Naive thymus-derived CD4-positive, alpha-beta T cell (primary cell): ENCODE measurements at regions of chr3 and their contacts with region 1.

Region 1: GRCh38 chr3:7800006-7800780 is 701.4 kb upstream of the LMCD1 start:
- DNase-seq: peak in 4 of 9 donors; percentile 19 to 44 (median 30)
- ATAC-seq: no peak
- H3K4me3 ChIP-seq: no peak overlapping the region
- H3K4me3 Mint-ChIP-seq: no peak overlapping the region
- H3K27ac ChIP-seq: no peak overlapping the region
- H3K27ac Mint-ChIP-seq: no peak overlapping the region
- H3K4me1 ChIP-seq: no peaks in the 10 kb centered on the region
- H3K4me1 Mint-ChIP-seq: peaks cover 0 to 23% (median 7%) of the 10 kb centered on the region in 7 donors
- H3K27me3 ChIP-seq: no peaks in the 10 kb centered on the region
- H3K27me3 Mint-ChIP-seq: peaks cover 0 to 3% (median 0%) of the 10 kb centered on the region in 5 donors

Region 2: DNA sequence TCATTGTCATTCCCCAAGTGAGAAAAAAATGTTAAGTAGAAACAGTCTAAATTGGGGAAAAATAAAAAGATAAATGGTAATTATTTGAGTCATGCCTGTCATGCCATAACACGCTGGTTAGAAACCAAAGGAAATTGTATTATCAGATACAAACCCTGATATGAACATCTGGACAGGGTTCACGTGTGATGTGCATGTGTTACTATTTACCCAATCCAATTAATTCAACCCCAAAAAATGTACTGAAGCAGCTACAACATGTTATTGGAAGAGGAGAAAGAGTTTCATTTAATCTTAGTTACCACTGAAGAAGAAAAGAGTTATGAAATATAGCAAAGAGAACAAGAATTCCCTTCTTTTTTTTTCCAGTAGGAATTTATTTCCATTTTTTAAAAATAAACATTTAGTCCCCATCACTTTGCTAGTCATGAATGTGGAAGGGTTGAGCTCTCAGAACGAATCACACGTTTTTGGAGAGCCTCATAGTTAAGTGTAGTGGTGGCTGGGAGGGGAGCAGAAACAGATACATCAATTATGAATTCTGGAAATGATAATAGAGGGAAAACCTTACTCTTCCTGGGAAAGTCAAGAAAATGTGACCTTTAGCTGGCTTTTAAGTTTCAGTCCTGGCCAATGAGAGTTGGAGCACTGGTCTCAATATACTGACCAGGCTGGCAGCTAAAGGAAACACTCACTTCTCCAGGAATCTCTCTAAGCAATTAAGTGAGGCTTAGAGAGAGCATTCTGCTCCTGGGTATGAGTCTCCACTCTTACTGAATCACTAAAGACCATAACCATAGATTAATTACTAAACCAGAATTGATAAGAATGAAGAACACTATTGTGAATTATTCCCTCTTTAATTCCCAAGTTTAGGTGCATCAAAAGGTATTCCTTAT is 142.7 kb before region 1 on chr3:
- CTCF ChIA-PET with region 1: no interaction called
- POLR2A ChIA-PET with region 1: no interaction called
- intact Hi-C with region 1: no loop called
- DNase-seq: no peak
- ATAC-seq: no peak
- H3K4me3 ChIP-seq: no peak overlapping the region
- H3K4me3 Mint-ChIP-seq: no peak overlapping the region
- H3K27ac ChIP-seq: no peak overlapping the region
- H3K27ac Mint-ChIP-seq: no peak overlapping the region
- H3K4me1 ChIP-seq: no peaks in the 10 kb centered on the region
- H3K4me1 Mint-ChIP-seq: no peaks in the 10 kb centered on the region
- H3K27me3 ChIP-seq: no peaks in the 10 kb centered on the region
- H3K27me3 Mint-ChIP-seq: peaks cover 0 to 15% (median 4%) of the 10 kb centered on the region in 5 donors

Region 3: GRCh38 chr3:7876741-7877297 is 76.6 kb after region 1 on chr3:
- CTCF ChIA-PET with region 1: no interaction called
- POLR2A ChIA-PET with region 1: no interaction called
- intact Hi-C with region 1: loop called in 1 of 2 experiments (anchors 5 kb)
- DNase-seq: peak in 8 of 9 donors; percentile 23 to 92 (median 82)
- ATAC-seq: peak; percentile 89
- H3K4me3 ChIP-seq: no peak overlapping the region
- H3K4me3 Mint-ChIP-seq: peak overlapping the region; percentile 52 to 87 (median 68)
- H3K27ac ChIP-seq: peak overlapping the region; percentile 27
- H3K27ac Mint-ChIP-seq: peak overlapping the region; percentile 79 to 97 (median 88)
- H3K4me1 ChIP-seq: peaks cover 11 to 27% of the 10 kb centered on the region in 2 donors
- H3K4me1 Mint-ChIP-seq: peaks cover 9 to 81% (median 51%) of the 10 kb centered on the region in 7 donors
- H3K27me3 ChIP-seq: no peaks in the 10 kb centered on the region
- H3K27me3 Mint-ChIP-seq: no peaks in the 10 kb centered on the region

Region 4: DNA sequence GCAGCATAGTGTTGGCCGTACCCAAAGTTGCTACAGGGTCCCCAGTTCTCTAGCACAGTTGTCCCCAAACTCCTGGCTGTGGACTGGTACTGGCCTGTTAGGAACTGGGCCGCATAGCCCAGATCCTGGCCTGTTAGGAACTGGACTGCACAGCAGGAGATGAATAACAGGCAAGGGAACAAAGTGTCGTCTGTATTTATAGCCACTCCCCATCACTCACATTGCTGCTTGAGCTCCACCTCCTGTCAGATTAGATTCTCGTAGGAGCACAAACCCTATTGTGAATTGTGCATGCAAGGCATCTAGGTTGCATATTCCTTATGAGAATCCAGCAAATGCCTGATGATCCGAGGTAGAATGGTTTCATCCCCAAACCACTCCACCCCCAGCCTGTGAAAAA is 97.5 kb after region 1 on chr3:
- CTCF ChIA-PET with region 1: no interaction called
- POLR2A ChIA-PET with region 1: no interaction called
- intact Hi-C with region 1: loop called in 1 of 2 experiments (anchors 5 kb)
- DNase-seq: no peak
- ATAC-seq: no peak
- H3K4me3 ChIP-seq: no peak overlapping the region
- H3K4me3 Mint-ChIP-seq: no peak overlapping the region
- H3K27ac ChIP-seq: no peak overlapping the region
- H3K27ac Mint-ChIP-seq: no peak overlapping the region
- H3K4me1 ChIP-seq: peaks cover 0 to 5% of the 10 kb centered on the region in 2 donors
- H3K4me1 Mint-ChIP-seq: peaks cover 0 to 36% (median 6%) of the 10 kb centered on the region in 7 donors
- H3K27me3 ChIP-seq: no peaks in the 10 kb centered on the region
- H3K27me3 Mint-ChIP-seq: no peaks in the 10 kb centered on the region

Region 5: GRCh38 chr3:7964899-7965298 is 164.7 kb after region 1 on chr3:
- CTCF ChIA-PET with region 1: interaction called, 3 read pairs
- POLR2A ChIA-PET with region 1: no interaction called
- intact Hi-C with region 1: loop called in 1 of 2 experiments (anchors 5 kb)
- DNase-seq: peak in 2 of 9 donors; percentile 2 to 6
- ATAC-seq: no peak
- H3K4me3 ChIP-seq: no peak overlapping the region
- H3K4me3 Mint-ChIP-seq: no peak overlapping the region
- H3K27ac ChIP-seq: no peak overlapping the region
- H3K27ac Mint-ChIP-seq: peak overlapping the region in 1 of 9 donors; percentile 41
- H3K4me1 ChIP-seq: no peaks in the 10 kb centered on the region
- H3K4me1 Mint-ChIP-seq: peaks cover 0 to 10% (median 0%) of the 10 kb centered on the region in 7 donors
- H3K27me3 ChIP-seq: no peaks in the 10 kb centered on the region
- H3K27me3 Mint-ChIP-seq: peaks cover 0 to 8% (median 0%) of the 10 kb centered on the region in 5 donors

Region 6: GRCh38 chr3:8111069-8111798 is 311.0 kb after region 1 on chr3:
- CTCF ChIA-PET with region 1: interaction called, 15 read pairs
- POLR2A ChIA-PET with region 1: no interaction called
- intact Hi-C with region 1: loop called (anchors 1 to 5 kb)
- DNase-seq: peak in 8 of 9 donors; percentile 29 to 68 (median 55)
- ATAC-seq: peak; percentile 84
- H3K4me3 ChIP-seq: no peak overlapping the region
- H3K4me3 Mint-ChIP-seq: peak overlapping the region in 8 of 10 donors; percentile 39 to 76 (median 54)
- H3K27ac ChIP-seq: no peak overlapping the region
- H3K27ac Mint-ChIP-seq: no peak overlapping the region
- H3K4me1 ChIP-seq: peaks cover 0 to 5% of the 10 kb centered on the region in 2 donors
- H3K4me1 Mint-ChIP-seq: peaks cover 0 to 7% (median 4%) of the 10 kb centered on the region in 7 donors
- H3K27me3 ChIP-seq: no peaks in the 10 kb centered on the region
- H3K27me3 Mint-ChIP-seq: peaks cover 0 to 10% (median 6%) of the 10 kb centered on the region in 5 donors

Region 7: GRCh38 chr3:8301728-8302462 is 501.7 kb after region 1 on chr3:
- CTCF ChIA-PET with region 1: interaction called, 3 read pairs
- POLR2A ChIA-PET with region 1: no interaction called
- intact Hi-C with region 1: loop called in 1 of 2 experiments (anchors 1 kb)
- DNase-seq: peak in 7 of 9 donors; percentile 16 to 56 (median 44)
- ATAC-seq: peak; percentile 50
- H3K4me3 ChIP-seq: no peak overlapping the region
- H3K4me3 Mint-ChIP-seq: no peak overlapping the region
- H3K27ac ChIP-seq: no peak overlapping the region
- H3K27ac Mint-ChIP-seq: peak overlapping the region in 5 of 9 donors; percentile 10 to 63 (median 37)
- H3K4me1 ChIP-seq: no peaks in the 10 kb centered on the region
- H3K4me1 Mint-ChIP-seq: peaks cover 0 to 15% (median 7%) of the 10 kb centered on the region in 7 donors
- H3K27me3 ChIP-seq: no peaks in the 10 kb centered on the region
- H3K27me3 Mint-ChIP-seq: peaks cover 0 to 4% (median 0%) of the 10 kb centered on the region in 5 donors